ENCODE measurements at regions of chr16 and their contacts with region 1.

Region 1: DNA sequence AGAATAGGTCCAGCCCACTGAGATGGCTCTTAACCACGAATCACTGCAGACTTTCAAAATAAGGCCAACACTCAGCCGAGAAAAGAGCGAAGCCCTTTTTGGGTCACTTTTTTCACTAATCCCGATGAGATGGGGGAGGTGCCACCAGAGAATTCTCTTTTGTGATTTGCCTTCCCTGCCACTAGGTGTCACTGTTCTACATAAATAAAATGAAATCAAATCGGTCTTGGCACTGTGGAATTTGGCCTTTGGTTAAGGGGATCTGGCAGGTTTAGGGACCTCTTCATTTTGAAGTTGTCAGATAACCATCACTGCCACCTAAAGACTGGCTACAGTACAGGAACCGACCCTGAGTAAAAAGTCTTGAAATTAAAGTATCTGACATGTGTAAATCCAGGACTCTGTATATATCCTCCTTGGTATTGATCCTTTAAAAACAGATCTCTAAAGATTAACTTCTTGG is 147.0 kb downstream of the HS3ST4 start:
- ATAC-seq: peak; percentile 11 to 74 (median 49)
- H3K4me3 ChIP-seq: peak overlapping the region in 1 of 5 donors; percentile 15
- H3K27ac ChIP-seq: no peak overlapping the region
- H3K4me1 ChIP-seq: no peaks in the 10 kb centered on the region

Region 2: DNA sequence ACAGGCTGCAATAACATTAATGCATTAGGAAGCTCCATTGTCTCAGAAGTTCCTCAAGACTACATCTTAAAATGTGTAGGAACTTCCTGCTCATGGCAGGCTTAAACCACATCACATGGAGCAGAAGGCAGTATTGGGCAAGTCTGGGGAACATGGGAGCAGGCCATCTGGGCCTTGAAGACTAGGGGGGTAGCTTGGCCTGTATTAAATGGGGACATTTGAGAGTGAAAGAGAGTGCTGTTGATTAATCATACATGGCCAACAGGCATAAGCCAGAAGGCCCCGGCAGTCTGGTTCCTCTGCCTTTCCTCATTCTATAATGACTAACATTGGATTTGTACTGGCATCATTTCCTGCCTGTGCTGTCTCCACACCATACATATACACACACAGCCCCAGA is 1018.2 kb before region 1 on chr16:
- in situ Hi-C with region 1: no loop called
- ATAC-seq: no peak
- H3K4me3 ChIP-seq: no peak overlapping the region
- H3K27ac ChIP-seq: no peak overlapping the region
- H3K4me1 ChIP-seq: no peaks in the 10 kb centered on the region

Region 3: DNA sequence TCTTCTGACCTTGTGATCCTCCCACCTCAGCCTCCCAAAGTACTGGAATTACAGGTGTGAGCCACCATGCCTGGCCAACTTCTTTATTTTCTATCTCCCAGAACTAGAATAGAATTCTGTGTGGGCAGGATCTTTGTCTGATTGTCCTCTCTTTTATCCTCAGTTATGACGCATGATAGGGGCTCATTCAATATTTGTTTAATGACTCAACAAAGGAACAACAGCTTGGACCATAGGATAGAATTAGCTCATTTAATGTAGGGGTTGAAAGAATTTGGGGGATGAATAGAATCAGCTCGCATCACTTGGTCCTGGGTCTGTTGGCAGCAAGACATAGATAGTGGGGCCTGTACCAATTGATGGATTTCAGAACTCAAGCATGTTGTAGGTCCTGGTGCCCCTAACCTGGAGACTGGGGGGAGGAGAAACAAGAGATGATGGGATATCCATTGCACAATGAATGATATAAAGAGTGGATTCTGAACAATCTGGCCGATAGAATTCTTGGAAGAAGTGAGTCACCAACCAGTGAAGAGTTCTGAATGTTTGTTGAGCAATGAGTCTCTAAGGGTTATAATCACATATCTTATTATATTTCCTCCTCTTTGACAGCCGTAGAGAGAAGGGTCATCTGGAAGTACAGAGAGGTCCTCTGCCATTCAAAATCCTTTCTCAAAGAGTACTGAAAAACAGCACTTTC is 103.2 kb after region 1 on chr16:
- in situ Hi-C with region 1: loop called in 1 of 9 experiments (anchors 25 kb)
- ATAC-seq: peak in 4 of 8 experiments; percentile 44 to 96 (median 62)
- H3K4me3 ChIP-seq: no peak overlapping the region
- H3K27ac ChIP-seq: no peak overlapping the region
- H3K4me1 ChIP-seq: no peaks in the 10 kb centered on the region

Region 4: GRCh38 chr16:26598061-26598460 is 759.3 kb after region 1 on chr16:
- in situ Hi-C with region 1: no loop called
- ATAC-seq: peak in 2 of 8 experiments; percentile 30 to 73
- H3K4me3 ChIP-seq: no peak overlapping the region
- H3K27ac ChIP-seq: no peak overlapping the region
- H3K4me1 ChIP-seq: no peaks in the 10 kb centered on the region

Region 5: DNA sequence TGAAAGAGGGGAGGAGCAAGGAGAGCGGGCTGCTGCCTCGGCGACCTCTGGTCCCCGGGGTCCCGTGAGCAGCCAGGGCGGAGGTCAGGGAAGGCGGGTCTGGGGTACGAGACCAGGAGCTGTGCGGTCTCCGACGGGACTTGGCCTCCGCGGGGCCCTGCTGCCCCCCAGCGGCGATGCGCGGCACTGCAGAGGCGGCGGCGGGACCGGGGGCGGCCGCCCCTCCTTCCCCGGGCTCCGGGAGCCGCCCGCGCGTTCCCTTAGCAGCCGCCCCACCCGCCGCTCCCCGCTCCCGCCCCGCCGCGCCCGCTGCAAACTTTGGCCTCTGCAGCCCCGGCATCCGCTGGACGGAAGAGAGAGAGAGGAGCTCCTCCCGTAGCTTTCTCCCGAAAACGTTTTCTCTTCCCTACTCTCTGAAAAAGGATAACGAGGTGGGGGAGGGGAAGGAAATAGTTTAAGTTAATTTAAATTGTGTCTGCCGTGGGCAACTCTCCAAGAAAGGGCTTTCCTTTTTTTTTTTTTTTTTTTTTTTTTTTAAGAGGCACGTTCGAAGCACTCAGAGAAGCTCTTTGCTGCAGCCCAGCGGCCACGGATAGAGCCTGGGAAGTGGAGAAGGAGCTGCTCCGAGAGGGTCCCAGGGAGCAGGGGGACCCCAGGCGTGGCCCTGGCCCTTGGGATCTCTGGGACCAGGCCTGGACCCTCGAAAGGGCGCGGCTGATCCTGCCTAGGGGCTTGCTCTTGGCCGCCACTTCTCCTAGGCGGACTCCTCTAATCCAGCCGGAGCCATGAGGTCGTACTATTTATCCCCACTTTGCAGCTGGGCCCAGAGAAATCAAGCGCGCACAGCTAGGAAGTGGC is 1271.1 kb after region 1 on chr16:
- in situ Hi-C with region 1: loop called in 3 of 9 experiments (anchors 25 kb)
- ATAC-seq: peak; percentile 88 to 96 (median 93)
- H3K4me3 ChIP-seq: peak overlapping the region; percentile 36 to 40 (median 38)
- H3K27ac ChIP-seq: peak overlapping the region in 1 of 2 donors; percentile 59
- H3K4me1 ChIP-seq: peaks cover 0 to 8% of the 10 kb centered on the region in 2 donors

Region 6: DNA sequence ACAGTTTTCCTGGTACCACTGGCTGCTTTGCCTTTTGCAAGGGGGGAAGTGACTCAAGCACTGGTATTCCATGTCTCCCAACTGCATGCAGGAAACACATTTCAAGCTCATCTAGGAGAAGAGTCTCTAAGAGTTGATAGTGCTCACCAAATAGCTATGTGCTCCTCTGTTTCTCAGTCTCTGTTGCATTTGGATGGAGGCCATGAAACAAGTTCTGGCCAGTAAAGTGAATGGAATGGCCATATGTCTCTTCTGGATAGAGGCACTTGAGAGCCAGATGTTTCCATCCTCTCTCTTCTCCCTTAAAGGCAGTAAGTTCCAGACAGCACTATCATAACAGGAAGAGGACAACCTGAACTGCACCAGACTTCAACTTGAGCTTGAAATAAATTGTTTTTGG is 1288.6 kb after region 1 on chr16:
- in situ Hi-C with region 1: loop called in 4 of 9 experiments (anchors 25 kb)
- ATAC-seq: no peak
- H3K4me3 ChIP-seq: no peak overlapping the region
- H3K27ac ChIP-seq: no peak overlapping the region
- H3K4me1 ChIP-seq: no peaks in the 10 kb centered on the region